Heart left ventricle (tissue), 16 donors: ENCODE measurements at regions of chr17 and their contacts with region 1.

Region 1: GRCh38 chr17:63425482-63425881 is 20.6 kb downstream of the CYB561 start:
- DNase-seq: peak; percentile 78 to 83 (median 78)
- ATAC-seq: peak; percentile 52 to 90 (median 80)
- H3K4me3 ChIP-seq: no peak overlapping the region
- H3K27ac ChIP-seq: no peak overlapping the region
- H3K4me1 ChIP-seq: peaks cover 0 to 35% (median 10%) of the 10 kb centered on the region in 12 donors
- H3K27me3 ChIP-seq: no peaks in the 10 kb centered on the region
- CTCF ChIP-seq: peak; percentile 89 to 99 (median 96)
- POLR2A ChIP-seq: no peak

Region 2: DNA sequence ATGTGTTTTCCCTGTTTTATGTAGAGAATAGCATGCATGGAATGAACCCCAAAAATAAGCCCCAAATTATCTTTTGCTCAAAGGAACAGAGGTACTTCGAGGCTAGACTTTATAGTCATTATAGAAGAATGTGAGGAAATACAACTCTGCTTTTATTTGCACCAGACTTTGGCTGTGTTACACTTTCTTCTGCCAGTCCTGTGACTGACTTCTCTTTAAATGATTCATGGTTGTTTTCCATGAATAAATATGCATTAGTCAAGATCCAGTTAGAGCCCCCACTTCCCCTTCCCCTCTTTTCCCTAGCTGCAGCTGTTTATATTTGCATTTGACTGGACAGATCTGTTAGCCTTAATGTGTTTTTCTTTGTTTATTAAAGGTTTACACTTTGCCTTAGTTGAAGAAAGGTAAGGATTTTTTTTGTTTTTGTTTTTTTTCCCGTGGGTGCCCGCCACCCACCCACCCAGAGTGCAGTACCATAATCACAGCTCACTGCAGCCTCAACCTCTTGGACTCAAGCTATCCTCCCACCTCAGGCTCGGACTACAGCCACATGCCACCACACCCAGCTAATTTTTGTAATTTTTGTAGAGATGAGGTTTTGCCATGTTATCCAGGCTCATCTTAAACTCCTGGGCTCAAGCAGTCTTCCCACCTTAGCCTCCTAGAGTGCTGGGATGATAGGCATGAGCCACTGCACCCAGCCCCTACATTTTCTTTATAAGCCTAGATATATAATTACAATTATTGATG is 132.0 kb before region 1 on chr17:
- intact Hi-C with region 1: no loop called
- DNase-seq: no peak
- ATAC-seq: peak in 1 of 4 donors; percentile 83
- H3K4me3 ChIP-seq: no peak overlapping the region
- H3K27ac ChIP-seq: peak overlapping the region in 2 of 12 donors; percentile 4 to 34
- H3K4me1 ChIP-seq: peaks cover 0 to 17% (median 0%) of the 10 kb centered on the region in 12 donors
- H3K27me3 ChIP-seq: no peaks in the 10 kb centered on the region
- CTCF ChIP-seq: no peak
- POLR2A ChIP-seq: no peak

Region 3: GRCh38 chr17:63478791-63479494 is 53.5 kb after region 1 on chr17:
- intact Hi-C with region 1: loop called (anchors 1 to 5 kb)
- DNase-seq: peak; percentile 72 to 88 (median 77)
- ATAC-seq: peak; percentile 64 to 84 (median 81)
- H3K4me3 ChIP-seq: peak overlapping the region in 7 of 12 donors; percentile 53 to 77 (median 65)
- H3K27ac ChIP-seq: peak overlapping the region in 1 of 12 donors; percentile 83
- H3K4me1 ChIP-seq: peaks cover 4 to 60% (median 37%) of the 10 kb centered on the region in 12 donors
- H3K27me3 ChIP-seq: peaks cover 0 to 16% (median 0%) of the 10 kb centered on the region in 9 donors
- CTCF ChIP-seq: peak; percentile 67 to 86 (median 74)
- POLR2A ChIP-seq: no peak

Region 4: GRCh38 chr17:63600569-63601438 is 175.3 kb after region 1 on chr17 and contains the start of gene TACO1:
- intact Hi-C with region 1: loop called in 2 of 10 experiments (anchors 2 kb)
- DNase-seq: peak; percentile 84 to 91 (median 85)
- ATAC-seq: peak; percentile 92 to 99 (median 98)
- H3K4me3 ChIP-seq: peak within 1 kb of the TSS; percentile 71 to 100 (median 90)
- H3K27ac ChIP-seq: peak within 1 kb of the TSS; percentile 66 to 96 (median 90)
- H3K4me1 ChIP-seq: peaks cover 0 to 24% (median 13%) of the 10 kb centered on the region in 12 donors
- H3K27me3 ChIP-seq: no peaks in the 10 kb centered on the region
- CTCF ChIP-seq: no peak
- POLR2A ChIP-seq: peak in 1 of 2 donors; percentile 77
- total RNA-seq, gene TACO1: 23.0 to 48.0 (median 40.6) TPM

Region 5: GRCh38 chr17:63611354-63611753 is 185.9 kb after region 1 on chr17:
- intact Hi-C with region 1: loop called (anchors 1 to 5 kb)
- DNase-seq: no peak
- ATAC-seq: no peak
- H3K4me3 ChIP-seq: no peak overlapping the region
- H3K27ac ChIP-seq: peak overlapping the region in 1 of 12 donors; percentile 40
- H3K4me1 ChIP-seq: peaks cover 0 to 3% (median 0%) of the 10 kb centered on the region in 12 donors
- H3K27me3 ChIP-seq: no peaks in the 10 kb centered on the region
- CTCF ChIP-seq: no peak
- POLR2A ChIP-seq: no peak

Region 6: GRCh38 chr17:63685041-63685440 is 259.6 kb after region 1 on chr17:
- intact Hi-C with region 1: loop called in 1 of 10 experiments (anchors 10 kb)
- DNase-seq: no peak
- ATAC-seq: peak in 2 of 4 donors; percentile 65 to 67
- H3K4me3 ChIP-seq: no peak overlapping the region
- H3K27ac ChIP-seq: no peak overlapping the region
- H3K4me1 ChIP-seq: peaks cover 0 to 33% (median 14%) of the 10 kb centered on the region in 12 donors
- H3K27me3 ChIP-seq: no peaks in the 10 kb centered on the region
- CTCF ChIP-seq: no peak
- POLR2A ChIP-seq: no peak